T-cell (primary cell): ENCODE measurements at regions of chr19 and their contacts with region 1.

Region 1: DNA sequence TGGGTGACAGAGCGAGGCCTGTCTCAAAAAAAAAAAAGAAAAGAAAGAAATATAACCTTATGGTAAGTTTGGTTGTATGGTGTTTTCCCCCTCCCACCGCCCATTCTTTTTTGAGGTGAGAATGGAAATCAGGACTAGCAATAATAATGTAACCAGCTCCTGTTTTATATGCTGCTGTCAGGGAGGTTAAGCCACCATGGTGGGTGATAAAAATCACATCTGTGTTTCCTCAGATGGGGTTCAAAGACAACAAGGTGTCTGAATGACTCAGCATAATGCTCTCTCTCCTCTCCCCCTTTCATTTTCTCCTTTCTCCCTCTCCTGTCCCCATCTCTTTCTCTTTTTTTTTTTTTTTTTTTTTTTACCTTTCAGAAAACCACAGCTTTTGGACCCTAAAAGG is 28.3 kb upstream of the GARRE1 start:
- DNase-seq: no peak
- ATAC-seq: peak in 2 of 4 experiments; percentile 23 to 43
- H3K4me3 ChIP-seq: no peak overlapping the region
- H3K4me3 Mint-ChIP-seq: no peak overlapping the region
- H3K27ac ChIP-seq: no peak overlapping the region
- H3K27ac Mint-ChIP-seq: peak overlapping the region; percentile 83
- H3K4me1 ChIP-seq: peaks cover 0 to 16% of the 10 kb centered on the region in 2 experiments
- H3K4me1 Mint-ChIP-seq: peaks cover 32 to 38% (median 33%) of the 10 kb centered on the region in 3 donors
- H3K27me3 ChIP-seq: no peaks in the 10 kb centered on the region
- H3K27me3 Mint-ChIP-seq: no peaks in the 10 kb centered on the region

Region 2: GRCh38 chr19:34386645-34387445 is 160.8 kb after region 1 on chr19:
- CTCF ChIA-PET with region 1: no interaction called
- POLR2A ChIA-PET with region 1: interaction called in 1 of 2 experiments, 14 read pairs
- DNase-seq: no peak
- ATAC-seq: no peak
- H3K4me3 ChIP-seq: no peak overlapping the region
- H3K4me3 Mint-ChIP-seq: no peak overlapping the region
- H3K27ac ChIP-seq: no peak overlapping the region
- H3K27ac Mint-ChIP-seq: peak overlapping the region in 1 of 2 donors; percentile 49
- H3K4me1 ChIP-seq: no peaks in the 10 kb centered on the region
- H3K4me1 Mint-ChIP-seq: peaks cover 0 to 12% (median 4%) of the 10 kb centered on the region in 3 donors
- H3K27me3 ChIP-seq: no peaks in the 10 kb centered on the region
- H3K27me3 Mint-ChIP-seq: no peaks in the 10 kb centered on the region

Region 3: GRCh38 chr19:34426096-34426661 is 200.1 kb after region 1 on chr19:
- CTCF ChIA-PET with region 1: no interaction called
- POLR2A ChIA-PET with region 1: interaction called in 1 of 2 experiments, 10 read pairs
- DNase-seq: no peak
- ATAC-seq: no peak
- H3K4me3 ChIP-seq: no peak overlapping the region
- H3K4me3 Mint-ChIP-seq: peak overlapping the region in 1 of 3 donors; percentile 41
- H3K27ac ChIP-seq: no peak overlapping the region
- H3K27ac Mint-ChIP-seq: no peak overlapping the region
- H3K4me1 ChIP-seq: peaks cover 19 to 24% of the 10 kb centered on the region in 2 experiments
- H3K4me1 Mint-ChIP-seq: peaks cover 18 to 28% (median 25%) of the 10 kb centered on the region in 3 donors
- H3K27me3 ChIP-seq: no peaks in the 10 kb centered on the region
- H3K27me3 Mint-ChIP-seq: no peaks in the 10 kb centered on the region